ENCODE measurements at regions of chr3 and their contacts with region 1.

Region 1: DNA sequence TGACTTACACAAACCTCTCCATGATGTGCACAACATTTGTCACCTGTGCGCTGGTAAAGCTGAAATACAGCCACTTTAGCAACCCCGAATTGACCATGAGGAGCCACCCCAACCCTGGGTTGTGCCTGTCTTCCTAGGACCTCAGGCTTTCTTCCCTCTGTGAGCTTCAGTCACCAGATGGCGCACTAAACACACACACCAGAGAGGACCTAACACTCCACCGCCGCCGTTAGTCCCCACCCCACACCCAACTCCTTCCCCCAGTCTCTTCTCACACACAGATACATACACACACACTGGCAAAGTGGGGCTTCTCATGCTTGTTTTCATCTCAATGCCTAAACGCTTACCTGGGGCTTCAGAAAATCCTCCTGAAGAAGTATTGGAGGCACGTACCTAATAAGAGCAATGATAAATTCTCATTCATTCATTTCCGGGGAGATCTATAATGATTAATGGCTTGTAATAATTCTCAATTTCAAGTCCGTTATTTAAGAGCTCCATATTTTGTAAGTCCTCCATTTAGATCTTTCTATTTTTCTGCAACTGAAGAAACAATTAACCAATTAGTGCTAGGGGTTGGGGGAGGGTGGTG is 2.1 kb upstream of the CCDC80 start:
- DNase-seq: peak; percentile 82
- H3K4me3 ChIP-seq: peak overlapping the region in 1 of 4 donors; percentile 18
- H3K27ac ChIP-seq: peak overlapping the region in 1 of 4 donors; percentile 0
- H3K4me1 ChIP-seq: peaks cover 0 to 35% (median 0%) of the 10 kb centered on the region in 4 donors
- H3K27me3 ChIP-seq: peaks cover 6% of the 10 kb centered on the region
- CTCF ChIP-seq: peak; percentile 61 to 71 (median 69)
- EP300 ChIP-seq: no peak
- POLR2A ChIP-seq: no peak

Region 2: GRCh38 chr3:112464264-112464663 is 178.7 kb before region 1 on chr3:
- in situ Hi-C with region 1: no loop called
- intact Hi-C with region 1: no loop called
- DNase-seq: no peak
- H3K4me3 ChIP-seq: no peak overlapping the region
- H3K27ac ChIP-seq: no peak overlapping the region
- H3K4me1 ChIP-seq: no peaks in the 10 kb centered on the region
- H3K27me3 ChIP-seq: no peaks in the 10 kb centered on the region
- CTCF ChIP-seq: no peak
- EP300 ChIP-seq: no peak
- POLR2A ChIP-seq: no peak

Region 3: DNA sequence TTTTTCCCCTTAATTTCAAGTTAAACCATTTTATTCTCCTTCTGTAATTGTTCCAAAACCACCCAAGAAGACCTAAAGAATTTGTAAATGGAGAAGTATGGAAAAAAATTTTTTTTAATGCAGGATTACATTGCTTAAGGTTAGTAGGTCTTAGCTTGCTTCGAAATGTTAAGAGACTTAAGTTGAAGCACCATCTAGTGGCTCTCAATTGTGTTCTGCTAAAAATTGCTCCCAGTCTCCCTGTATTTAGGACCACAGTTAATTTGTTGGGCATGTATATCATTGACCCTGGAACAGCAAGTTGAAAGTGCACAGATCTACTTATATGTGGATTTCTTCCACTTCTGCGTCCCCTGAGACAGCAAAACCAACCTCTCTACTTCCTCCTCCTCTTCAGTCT is 171.3 kb after region 1 on chr3:
- in situ Hi-C with region 1: loop called in 3 of 4 experiments (anchors 10 kb)
- intact Hi-C with region 1: loop called (anchors 2 kb)
- DNase-seq: no peak
- H3K4me3 ChIP-seq: no peak overlapping the region
- H3K27ac ChIP-seq: peak overlapping the region in 2 of 4 donors; percentile 68
- H3K4me1 ChIP-seq: peaks cover 3 to 30% (median 10%) of the 10 kb centered on the region in 4 donors
- H3K27me3 ChIP-seq: no peaks in the 10 kb centered on the region
- CTCF ChIP-seq: peak; percentile 9 to 33 (median 30)
- EP300 ChIP-seq: no peak
- POLR2A ChIP-seq: no peak

Region 4: GRCh38 chr3:112979240-112979832 is 336.3 kb after region 1 on chr3:
- in situ Hi-C with region 1: loop called (anchors 5 to 25 kb)
- intact Hi-C with region 1: loop called (anchors 5 kb)
- DNase-seq: no peak
- H3K4me3 ChIP-seq: no peak overlapping the region
- H3K27ac ChIP-seq: no peak overlapping the region
- H3K4me1 ChIP-seq: peaks cover 0 to 4% (median 0%) of the 10 kb centered on the region in 4 donors
- H3K27me3 ChIP-seq: no peaks in the 10 kb centered on the region
- CTCF ChIP-seq: peak; percentile 63 to 73 (median 72)
- EP300 ChIP-seq: no peak
- POLR2A ChIP-seq: no peak

Region 5: DNA sequence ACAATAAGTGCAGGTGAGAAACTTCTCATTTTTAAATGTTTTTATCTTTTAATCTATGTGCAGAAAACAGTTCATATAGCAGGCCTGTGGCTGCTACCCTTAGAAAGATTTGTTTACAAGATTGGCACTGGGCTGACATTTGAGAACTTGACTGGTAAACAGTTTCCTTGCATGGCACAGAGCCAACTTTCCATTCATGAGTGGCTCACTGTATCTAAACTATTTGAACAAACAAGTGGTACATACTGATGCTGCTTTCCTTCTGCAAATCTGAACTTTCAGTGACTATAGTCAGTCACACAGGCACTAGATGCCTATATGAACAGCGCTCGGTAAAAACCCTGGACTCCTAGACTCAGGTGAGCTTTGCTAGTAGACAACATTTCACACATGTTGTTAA is 341.5 kb after region 1 on chr3:
- in situ Hi-C with region 1: loop called (anchors 5 to 25 kb)
- intact Hi-C with region 1: loop called (anchors 5 kb)
- DNase-seq: peak; percentile 31
- H3K4me3 ChIP-seq: no peak overlapping the region
- H3K27ac ChIP-seq: no peak overlapping the region
- H3K4me1 ChIP-seq: no peaks in the 10 kb centered on the region
- H3K27me3 ChIP-seq: no peaks in the 10 kb centered on the region
- CTCF ChIP-seq: no peak
- EP300 ChIP-seq: no peak
- POLR2A ChIP-seq: no peak

Region 6: GRCh38 chr3:112990672-112991602 is 347.9 kb after region 1 on chr3 and contains the start of gene GTPBP8:
- in situ Hi-C with region 1: loop called in 2 of 4 experiments (anchors 10 to 25 kb)
- intact Hi-C with region 1: no loop called
- DNase-seq: peak; percentile 95
- H3K4me3 ChIP-seq: peak within 1 kb of the TSS; percentile 60 to 91 (median 78)
- H3K27ac ChIP-seq: peak within 1 kb of the TSS; percentile 94 to 99 (median 97)
- H3K4me1 ChIP-seq: peaks cover 7 to 26% (median 13%) of the 10 kb centered on the region in 4 donors
- H3K27me3 ChIP-seq: no peaks in the 10 kb centered on the region
- CTCF ChIP-seq: peak in 2 of 5 experiments; percentile 11 to 12
- EP300 ChIP-seq: no peak
- POLR2A ChIP-seq: peak; percentile 98
- total RNA-seq, gene GTPBP8: 6.7 to 46.7 (median 17.6) TPM

Measured in transverse colon (tissue), 4 donors.